A549 (cell line): ENCODE measurements at regions of chr9 and their contacts with region 1.

Region 1: DNA sequence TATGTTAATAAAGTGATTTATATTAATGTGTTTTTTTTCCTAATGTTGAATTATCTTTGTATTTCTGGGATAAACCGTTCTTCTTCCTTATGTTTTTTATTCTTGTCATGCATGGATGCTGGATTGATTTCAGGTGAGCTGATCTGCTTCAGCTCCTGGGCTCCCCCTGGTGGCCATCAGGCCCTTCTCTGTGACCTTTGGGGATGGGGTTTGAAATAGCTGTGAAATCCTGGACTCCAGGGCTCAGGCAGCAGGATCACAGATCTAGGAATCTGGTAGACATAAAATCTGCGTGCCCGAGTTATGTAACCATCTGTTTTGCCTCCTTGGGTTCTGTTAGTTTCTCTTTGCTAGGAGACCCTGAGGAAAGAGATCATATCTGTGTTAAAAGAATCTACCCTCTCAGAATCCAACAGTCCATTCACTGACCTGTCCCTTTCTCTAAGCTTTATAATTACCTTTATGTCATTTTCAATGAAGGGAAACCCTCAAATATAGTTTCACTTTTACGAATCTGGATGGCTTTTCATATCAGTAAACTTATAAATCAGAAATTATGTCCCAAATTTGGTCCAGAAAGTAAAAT is 12.2 kb upstream of the OR13J1 start:
- DNase-seq: peak; percentile 76 to 87
- ATAC-seq: peak; percentile 90 to 96; a peak in 5 of 6 replicates
- H3K4me3 ChIP-seq: no peak overlapping the region
- H3K27ac ChIP-seq: no peak overlapping the region
- H3K4me1 ChIP-seq: peaks cover 4% of the 10 kb centered on the region; the same call in 1 of the 3 replicates
- CTCF ChIP-seq: peak; percentile 97
- EP300 ChIP-seq: no peak
- POLR2A ChIP-seq: no peak
- RAD21 ChIP-seq: peak; percentile 86 to 87

Region 2: DNA sequence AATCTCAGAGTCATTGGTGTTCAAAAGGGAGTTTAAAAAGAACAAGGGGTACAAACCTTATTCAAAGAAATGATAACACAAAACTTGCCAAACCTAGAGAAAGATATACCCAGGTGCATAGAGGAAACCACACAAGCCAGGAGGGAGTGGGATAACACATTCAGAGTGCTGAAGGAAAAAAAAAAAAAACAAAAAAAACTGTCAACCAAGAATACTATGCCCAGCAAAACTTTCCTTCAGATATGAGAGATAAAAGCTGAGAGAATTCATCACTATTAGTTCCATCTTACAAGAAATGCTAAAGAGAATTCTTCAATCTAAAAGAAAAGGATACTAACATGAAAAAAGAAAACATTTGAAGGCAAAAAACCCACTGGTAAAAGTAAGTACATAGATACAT is 288.8 kb before region 1 on chr9:
- CTCF ChIA-PET with region 1: no interaction called
- POLR2A ChIA-PET with region 1: no interaction called
- DNase-seq: no peak
- ATAC-seq: no peak
- H3K4me3 ChIP-seq: no peak overlapping the region
- H3K27ac ChIP-seq: no peak overlapping the region
- H3K4me1 ChIP-seq: no peaks in the 10 kb centered on the region
- CTCF ChIP-seq: no peak
- EP300 ChIP-seq: no peak
- POLR2A ChIP-seq: no peak
- RAD21 ChIP-seq: no peak

Region 3: GRCh38 chr9:35774907-35775635 is 107.3 kb before region 1 on chr9:
- CTCF ChIA-PET with region 1: interaction called, 12 read pairs
- POLR2A ChIA-PET with region 1: no interaction called
- DNase-seq: no peak
- ATAC-seq: no peak; a peak in 1 of 6 replicates
- H3K4me3 ChIP-seq: no peak overlapping the region
- H3K27ac ChIP-seq: no peak overlapping the region
- H3K4me1 ChIP-seq: peaks cover 23% of the 10 kb centered on the region
- CTCF ChIP-seq: no peak
- EP300 ChIP-seq: no peak
- POLR2A ChIP-seq: no peak
- RAD21 ChIP-seq: no peak

Region 4: DNA sequence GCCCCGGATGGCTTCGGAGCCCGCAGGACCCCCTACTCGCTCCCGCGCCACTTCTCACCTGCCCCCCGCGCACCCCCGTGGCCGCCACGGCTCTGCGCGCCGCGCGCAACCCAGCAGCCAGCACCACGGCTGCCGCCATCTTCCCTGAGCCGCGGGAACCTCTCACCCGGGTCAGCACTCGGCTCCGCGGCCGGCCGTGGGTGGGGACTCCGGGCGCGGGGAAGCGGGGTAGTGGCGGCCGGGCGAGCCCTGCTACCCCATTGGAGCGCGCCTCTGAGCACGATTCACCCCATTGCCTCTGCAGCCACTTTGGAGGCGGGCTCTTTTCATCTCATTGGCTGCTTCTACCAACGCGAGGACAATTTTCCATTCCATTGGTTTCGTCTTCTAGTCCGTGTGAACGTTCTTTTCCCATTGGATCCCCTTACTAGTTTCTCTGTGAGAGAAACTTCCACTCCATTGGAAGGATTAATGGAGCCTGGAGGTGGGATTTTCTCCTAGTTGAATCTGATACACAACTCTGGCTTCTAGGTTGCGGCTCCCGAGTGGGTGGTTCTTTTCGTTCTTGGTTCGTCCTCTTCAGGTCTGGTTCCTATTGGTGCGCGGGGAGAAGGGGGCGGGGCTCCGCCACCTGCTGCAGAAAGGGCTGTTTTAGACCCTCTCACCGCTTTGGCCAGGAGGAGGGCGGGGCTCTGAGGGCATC is 67.4 kb before region 1 on chr9 and contains the start of gene HINT2:
- CTCF ChIA-PET with region 1: interaction called, 31 read pairs
- POLR2A ChIA-PET with region 1: interaction called, 7 read pairs
- DNase-seq: peak; percentile 98
- ATAC-seq: peak; percentile 86 to 92
- H3K4me3 ChIP-seq: peak within 1 kb of the TSS; percentile 73
- H3K27ac ChIP-seq: peak within 1 kb of the TSS; percentile 94 to 96
- H3K4me1 ChIP-seq: peaks cover 21% of the 10 kb centered on the region
- CTCF ChIP-seq: no peak
- EP300 ChIP-seq: no peak
- POLR2A ChIP-seq: peak; percentile 88
- RAD21 ChIP-seq: 0 out of 5 replicates have a peak, but pooled peaks of 1 of the 2 experiments have one; percentile 2
- polyA plus RNA-seq, gene HINT2: 46.9 and 47.3 TPM in 2 replicates

Region 5: DNA sequence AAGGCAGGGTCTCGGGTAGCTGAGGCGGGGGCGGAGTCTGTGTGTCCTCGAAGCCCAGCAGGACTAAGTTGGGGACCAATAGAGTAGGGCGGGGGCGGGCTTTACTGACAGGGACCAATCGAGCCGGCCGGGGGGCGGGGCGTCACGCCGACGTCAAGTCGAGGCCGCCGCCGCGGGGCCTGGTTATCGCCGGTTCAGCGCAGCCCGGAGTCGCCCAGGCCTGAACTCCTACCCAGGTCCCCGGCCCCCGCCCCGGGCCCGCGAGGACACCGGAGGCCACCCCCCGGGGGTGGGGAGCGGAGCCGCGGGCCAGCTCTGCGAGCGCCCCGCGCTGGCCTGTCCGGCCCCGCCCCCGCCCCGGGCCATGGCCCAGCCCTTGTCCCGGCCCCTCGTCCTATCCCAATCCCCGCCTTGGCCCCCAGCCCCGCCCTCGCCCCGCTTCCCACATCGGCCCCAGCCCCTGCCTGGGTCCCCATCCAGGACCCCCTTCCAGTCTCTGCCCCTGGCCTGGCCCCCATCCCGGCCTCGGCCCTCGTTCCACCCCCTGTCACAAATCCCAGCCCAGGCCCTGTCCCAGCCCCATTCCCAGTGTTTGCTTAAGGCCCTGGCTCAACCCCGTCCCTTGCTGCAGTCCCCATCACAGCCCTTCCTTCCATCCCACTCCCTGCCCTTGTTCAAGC is 53.1 kb before region 1 on chr9 and contains the start of gene TMEM8B:
- CTCF ChIA-PET with region 1: interaction called, 28 read pairs
- POLR2A ChIA-PET with region 1: interaction called, 3 read pairs
- DNase-seq: peak; percentile 90 to 97
- ATAC-seq: peak; percentile 86 to 93
- H3K4me3 ChIP-seq: peak within 1 kb of the TSS; percentile 80
- H3K27ac ChIP-seq: peak within 1 kb of the TSS; percentile 84 to 91
- H3K4me1 ChIP-seq: peaks cover 4% of the 10 kb centered on the region; the same call in 2 of the 3 replicates
- CTCF ChIP-seq: no peak
- EP300 ChIP-seq: no peak
- POLR2A ChIP-seq: no peak
- RAD21 ChIP-seq: no peak
- polyA plus RNA-seq, gene TMEM8B: 1.8 and 2.0 TPM in 2 replicates

Region 6: DNA sequence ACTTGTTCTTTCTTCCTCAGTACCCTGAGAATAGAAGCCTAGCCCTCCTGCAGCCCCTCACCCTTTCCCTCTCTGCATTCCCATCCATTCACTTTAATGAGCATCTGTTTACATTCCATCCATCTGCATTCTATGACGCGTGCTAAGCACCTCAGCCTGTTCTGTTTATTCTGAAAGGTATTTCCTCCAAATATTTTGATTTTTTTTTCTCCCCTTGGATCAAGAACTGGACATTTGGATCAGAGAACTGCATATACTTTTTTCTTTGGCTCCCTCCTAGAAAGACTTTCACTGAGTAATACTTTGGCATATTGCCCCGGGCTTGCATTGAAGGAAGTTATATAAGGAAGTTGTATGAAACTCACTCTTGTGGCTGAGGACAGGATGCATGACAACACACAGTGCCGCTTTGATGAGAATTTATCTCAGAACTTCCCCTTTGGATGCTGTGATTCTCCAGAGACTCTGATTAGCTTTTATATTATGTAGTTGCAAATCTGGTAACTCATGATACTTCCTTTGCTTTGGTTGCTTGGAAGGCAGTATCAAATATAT is 37.6 kb before region 1 on chr9:
- CTCF ChIA-PET with region 1: interaction called, 13 read pairs
- POLR2A ChIA-PET with region 1: no interaction called
- DNase-seq: peak in 1 of 2 experiments; percentile 56
- ATAC-seq: peak in 1 of 2 experiments; percentile 55; a peak in 3 of 6 replicates
- H3K4me3 ChIP-seq: no peak overlapping the region
- H3K27ac ChIP-seq: no peak overlapping the region
- H3K4me1 ChIP-seq: peaks cover 13% of the 10 kb centered on the region
- CTCF ChIP-seq: no peak
- EP300 ChIP-seq: no peak
- POLR2A ChIP-seq: no peak
- RAD21 ChIP-seq: no peak

Region 7: DNA sequence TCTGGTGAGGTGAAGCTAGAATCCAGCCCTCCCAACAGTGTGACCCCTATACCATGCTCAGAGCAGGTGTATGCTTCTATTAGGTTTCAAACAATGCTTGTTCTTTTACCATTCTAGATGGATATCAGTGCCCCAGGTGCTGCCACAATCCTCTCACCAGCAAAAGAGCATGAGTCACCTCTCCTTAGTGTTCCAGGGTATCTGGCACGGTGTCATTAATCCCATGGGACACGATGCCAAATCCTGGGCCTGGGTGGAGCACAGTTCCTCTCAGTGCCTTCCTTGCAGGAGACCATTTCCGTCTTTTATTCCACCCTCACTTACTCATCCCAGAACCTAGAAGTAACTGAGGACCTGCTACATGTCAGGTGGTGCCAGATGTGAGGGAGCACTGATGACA is 10.9 kb before region 1 on chr9:
- CTCF ChIA-PET with region 1: interaction called, 25 read pairs
- POLR2A ChIA-PET with region 1: no interaction called
- DNase-seq: no peak
- ATAC-seq: 0 out of 6 replicates have a peak, but pooled peaks of 1 of the 2 experiments have one; percentile 35
- H3K4me3 ChIP-seq: no peak overlapping the region
- H3K27ac ChIP-seq: no peak overlapping the region
- H3K4me1 ChIP-seq: peaks cover 2% of the 10 kb centered on the region; the same call in 1 of the 3 replicates
- CTCF ChIP-seq: no peak
- EP300 ChIP-seq: no peak
- POLR2A ChIP-seq: no peak
- RAD21 ChIP-seq: no peak

Region 8: DNA sequence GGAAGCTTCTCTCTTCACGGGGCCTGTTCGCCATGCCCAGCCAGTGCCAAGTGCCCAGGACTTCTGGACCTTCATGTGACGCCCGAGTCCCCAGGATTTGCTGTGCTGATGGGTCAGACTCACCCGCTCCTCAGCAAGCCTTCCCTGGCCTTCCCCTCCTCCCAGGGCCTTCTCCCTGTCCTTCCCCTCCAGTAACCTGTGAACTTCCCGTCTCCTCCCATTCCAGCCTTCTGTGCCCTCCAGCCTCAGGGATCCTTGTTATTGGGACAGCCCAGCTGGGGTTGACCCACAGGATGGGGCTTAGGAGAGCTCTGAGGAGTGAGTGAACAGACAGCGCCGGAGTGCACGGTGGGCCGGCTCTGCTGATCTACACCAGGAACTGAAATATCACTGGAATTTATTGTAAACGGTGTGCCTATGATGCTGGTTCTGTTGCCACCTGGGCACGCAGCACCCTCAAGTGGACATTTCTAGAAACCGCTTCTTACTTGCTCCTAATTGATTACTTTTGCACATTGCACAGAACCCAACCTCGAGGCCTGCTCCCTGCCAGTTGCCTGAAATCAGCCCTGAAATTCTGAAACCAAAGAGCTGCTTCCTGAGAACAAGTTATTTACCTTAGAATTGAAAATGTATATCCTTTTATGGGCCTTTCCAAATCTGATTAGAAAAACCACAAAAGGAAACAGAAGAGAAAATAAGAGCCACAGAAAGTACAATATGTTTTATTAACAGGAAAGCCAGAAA is 28.4 kb after region 1 on chr9:
- CTCF ChIA-PET with region 1: interaction called, 17 read pairs
- POLR2A ChIA-PET with region 1: no interaction called
- DNase-seq: peak; percentile 79 to 82
- ATAC-seq: peak in 1 of 2 experiments; percentile 22; a peak in 3 of 6 replicates
- H3K4me3 ChIP-seq: no peak overlapping the region
- H3K27ac ChIP-seq: peak overlapping the region; percentile 93 to 99
- H3K4me1 ChIP-seq: peaks cover 49% of the 10 kb centered on the region
- CTCF ChIP-seq: peak; percentile 80
- EP300 ChIP-seq: no peak
- POLR2A ChIP-seq: no peak
- RAD21 ChIP-seq: peak; percentile 86 to 87